GM18951 (cell line): ENCODE measurements at regions of chr14 and their contacts with region 1.

Region 1: DNA sequence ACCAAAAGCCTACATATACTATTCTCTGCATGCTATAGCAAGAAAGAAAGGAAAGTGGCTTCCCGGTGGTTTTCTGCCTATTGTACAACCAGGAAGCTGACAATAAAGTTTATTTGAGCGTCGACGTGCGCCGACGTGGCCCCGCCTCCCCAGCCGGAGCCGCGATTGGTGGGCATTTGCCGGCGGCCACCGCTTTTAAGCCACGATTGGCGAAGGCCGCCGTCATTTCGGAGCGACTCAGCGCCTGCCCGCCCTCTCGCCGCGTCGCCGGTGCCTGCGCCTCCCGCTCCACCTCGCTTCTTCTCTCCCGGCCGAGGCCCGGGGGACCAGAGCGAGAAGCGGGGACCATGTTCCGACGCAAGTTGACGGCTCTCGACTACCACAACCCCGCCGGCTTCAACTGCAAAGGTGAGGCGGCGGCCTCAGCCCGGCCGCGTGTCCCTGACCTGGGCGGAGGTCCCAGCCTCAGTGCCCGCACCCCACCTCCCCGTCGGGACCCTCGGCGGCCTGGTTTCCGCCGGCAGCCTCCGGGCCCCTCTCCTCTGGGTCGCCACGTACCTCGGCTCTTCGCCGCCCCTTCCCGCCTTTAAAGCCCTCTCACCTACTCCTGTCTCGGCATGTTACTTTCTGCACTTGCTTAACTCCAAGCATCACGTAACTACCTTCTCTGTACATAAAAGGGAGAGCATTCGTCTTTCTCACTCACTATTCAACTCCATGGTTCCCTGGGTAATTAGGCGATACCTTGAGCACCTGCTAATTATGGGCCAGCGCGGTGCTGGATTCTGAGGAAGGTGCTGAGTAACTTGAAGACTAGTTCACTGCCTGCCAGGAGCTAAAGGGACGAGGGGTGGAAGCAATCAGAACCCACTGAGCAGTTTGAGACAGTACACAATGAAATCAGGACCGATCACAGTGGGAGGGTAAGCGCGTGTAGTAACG is at the start of gene RTRAF:
- POLR2A ChIP-seq: peak; percentile 89

Region 2: DNA sequence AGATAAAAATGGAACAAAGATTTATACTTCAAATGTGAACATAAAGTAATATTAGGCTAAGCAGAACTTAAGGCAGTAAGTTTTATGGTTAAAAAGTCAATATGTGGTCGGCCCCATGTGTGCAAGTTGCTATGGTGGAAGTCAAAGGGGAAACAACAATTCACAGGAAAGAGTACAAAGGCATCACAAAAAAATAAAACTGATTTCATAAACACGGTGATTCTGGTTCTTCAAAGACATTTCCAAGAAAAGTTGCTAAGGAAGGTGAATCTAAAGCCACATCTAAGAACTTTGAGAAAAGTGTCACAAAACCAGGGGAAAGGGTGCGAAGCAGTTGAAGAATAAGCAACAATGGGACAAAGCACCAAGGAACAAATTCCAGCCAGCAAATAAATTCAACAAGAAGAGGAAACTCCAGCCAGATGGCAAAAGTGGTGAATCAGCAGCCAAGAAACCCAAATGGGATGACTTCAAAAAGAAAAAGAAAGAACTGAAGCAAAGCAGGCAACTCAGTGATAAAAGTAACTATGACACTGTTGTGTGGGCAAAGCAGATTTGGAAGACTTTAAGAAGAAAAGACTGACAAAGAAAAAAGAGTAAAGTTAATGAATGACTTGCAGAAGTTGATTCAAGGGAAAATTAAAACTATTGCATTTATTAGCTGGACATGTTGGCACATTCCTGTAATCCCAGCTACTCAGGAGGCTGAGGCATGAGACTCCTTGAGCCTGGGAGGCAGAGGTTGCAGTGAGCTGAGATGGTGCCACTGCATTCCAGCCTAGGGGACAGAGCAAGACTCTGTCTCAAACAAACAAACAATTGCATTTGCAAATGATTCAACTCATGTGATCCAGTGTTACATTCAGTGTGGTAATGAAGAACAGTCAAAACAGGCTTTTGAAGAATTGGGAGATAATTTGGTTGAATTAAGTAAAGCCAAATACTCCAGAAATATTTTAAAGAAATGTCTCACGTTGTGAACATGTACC is 297.4 kb after region 1 on chr14:
- in situ Hi-C with region 1: loop called (anchors 10 kb)
- POLR2A ChIP-seq: no peak